Adrenal gland (tissue), 19 donors: ENCODE measurements at regions of chr16 and their contacts with region 1.

Region 1: DNA sequence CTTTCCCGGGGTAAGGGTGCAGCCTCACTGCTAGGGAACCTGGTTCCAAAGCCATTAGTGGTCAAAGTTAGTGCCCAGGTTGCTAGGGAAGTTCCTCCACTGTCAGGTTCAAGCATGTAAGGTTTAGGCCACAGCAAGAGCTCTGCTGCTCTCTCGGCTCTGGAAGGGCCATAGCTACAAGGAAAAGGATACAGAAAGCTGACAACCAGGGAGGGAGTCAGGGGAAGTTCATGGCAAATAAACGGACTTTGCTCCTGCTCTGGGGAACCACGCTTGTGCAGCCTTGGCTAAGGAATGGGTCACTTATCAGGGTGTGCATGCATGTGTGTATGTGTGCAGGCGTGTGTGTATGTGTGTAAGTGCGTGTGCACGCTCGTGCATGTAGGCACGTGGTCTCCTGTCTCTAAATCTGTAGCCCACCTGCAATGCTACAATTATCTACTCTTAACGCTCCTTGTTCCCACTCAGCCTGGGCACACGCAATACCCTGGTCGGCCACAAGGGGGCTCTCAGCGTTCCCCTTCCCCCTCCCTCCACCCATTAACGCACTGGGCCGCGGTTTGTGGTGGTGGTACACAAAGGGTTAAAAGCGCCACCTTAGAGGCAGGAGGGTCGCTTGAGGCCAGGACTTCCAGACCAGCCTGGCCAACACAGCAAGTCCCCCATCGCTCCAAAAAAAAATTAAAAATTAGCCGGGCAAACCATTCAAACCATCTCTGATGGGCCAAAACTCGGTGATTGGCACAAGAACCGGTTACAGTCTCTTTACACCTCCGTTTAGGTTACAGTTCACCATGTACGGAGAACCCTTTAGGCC is 48.4 kb upstream of the KDM8 start:
- DNase-seq: peak; percentile 30 to 71 (median 47)
- H3K4me3 ChIP-seq: no peak overlapping the region
- H3K27ac ChIP-seq: no peak overlapping the region
- H3K4me1 ChIP-seq: no peaks in the 10 kb centered on the region
- H3K27me3 ChIP-seq: no peaks in the 10 kb centered on the region
- CTCF ChIP-seq: peak; percentile 77 to 96 (median 91)
- POLR2A ChIP-seq: no peak

Region 2: DNA sequence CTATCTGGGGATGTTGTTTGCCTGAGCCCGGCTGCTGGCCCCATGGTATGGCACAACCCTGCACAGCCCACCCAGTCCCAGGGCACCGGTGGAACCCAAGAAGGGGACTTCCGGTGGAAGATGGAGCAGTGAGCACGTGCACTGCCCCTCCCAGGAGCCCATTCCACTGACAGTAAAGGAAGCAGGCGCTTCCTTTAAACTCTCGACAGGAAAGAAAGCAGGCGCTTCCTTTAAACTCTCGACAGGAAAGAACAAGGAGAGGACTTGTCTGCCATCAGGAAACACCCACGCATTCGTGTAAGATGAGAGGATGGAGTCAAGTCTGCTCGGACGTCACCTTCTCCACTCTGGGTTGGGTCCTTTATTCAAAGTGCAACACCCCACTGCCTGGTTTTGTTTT is 300.8 kb after region 1 on chr16:
- intact Hi-C with region 1: loop called in 1 of 2 experiments (anchors 5 kb)
- DNase-seq: peak in 3 of 7 donors; percentile 34 to 63 (median 34)
- H3K4me3 ChIP-seq: no peak overlapping the region
- H3K27ac ChIP-seq: peak overlapping the region in 1 of 5 donors; percentile 72
- H3K4me1 ChIP-seq: peaks cover 5 to 12% of the 10 kb centered on the region in 2 donors
- H3K27me3 ChIP-seq: no peaks in the 10 kb centered on the region
- CTCF ChIP-seq: no peak
- POLR2A ChIP-seq: no peak

Region 3: DNA sequence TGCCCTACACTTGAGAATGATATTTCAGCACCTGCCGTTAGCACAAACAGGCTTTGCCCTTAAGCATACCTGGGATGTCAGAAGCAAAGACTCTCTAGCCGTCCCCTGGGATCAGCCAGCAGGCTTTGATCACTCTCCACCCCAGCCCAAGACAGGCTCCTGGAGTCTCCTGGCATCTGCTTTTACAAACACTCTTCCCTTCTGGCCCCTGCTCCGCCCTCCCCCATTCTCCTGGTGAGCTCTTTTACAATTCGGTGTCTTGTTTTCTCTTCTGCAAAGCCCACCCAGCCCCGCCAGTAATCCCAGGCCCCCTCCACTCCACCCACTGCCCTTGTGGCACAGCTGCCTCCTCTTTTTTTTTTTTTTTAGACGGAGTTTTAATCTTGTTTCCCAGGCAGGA is 445.5 kb after region 1 on chr16:
- intact Hi-C with region 1: no loop called
- DNase-seq: no peak
- H3K4me3 ChIP-seq: no peak overlapping the region
- H3K27ac ChIP-seq: no peak overlapping the region
- H3K4me1 ChIP-seq: no peaks in the 10 kb centered on the region
- H3K27me3 ChIP-seq: no peaks in the 10 kb centered on the region
- CTCF ChIP-seq: no peak
- POLR2A ChIP-seq: no peak